Endothelial cell of umbilical vein (primary cell): ENCODE measurements at regions of chr5 and their contacts with region 1.

Region 1: DNA sequence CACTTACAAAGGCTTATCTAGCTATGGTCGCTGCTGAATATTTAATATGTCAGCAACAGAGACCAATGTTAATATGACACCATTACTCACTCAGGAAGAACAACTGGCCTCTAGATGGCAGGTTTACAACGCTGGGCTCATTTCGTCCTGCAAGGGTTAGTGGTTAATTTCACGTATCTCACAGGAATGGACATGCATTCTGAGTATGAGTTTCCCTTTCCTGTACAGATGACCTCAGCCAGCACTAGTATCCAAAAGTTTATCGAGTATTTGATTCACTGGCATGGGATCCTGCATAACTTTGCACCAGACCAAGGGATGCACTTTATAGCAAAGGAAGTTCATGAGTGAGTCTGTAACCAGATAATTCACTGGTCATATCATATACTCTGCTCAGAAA is 8.7 kb upstream of the TRPC7 start:
- DNase-seq: peak; percentile 72
- H3K4me3 ChIP-seq: no peak overlapping the region
- H3K27ac ChIP-seq: no peak overlapping the region
- H3K4me1 ChIP-seq: peaks cover 3% of the 10 kb centered on the region
- H3K27me3 ChIP-seq: peaks cover 0 to 12% of the 10 kb centered on the region in 2 experiments
- CTCF ChIP-seq: peak; percentile 51 to 58
- POLR2A ChIP-seq: no peak

Region 2: GRCh38 chr5:135718151-135718550 is 655.9 kb before region 1 on chr5:
- CTCF ChIA-PET with region 1: no interaction called
- POLR2A ChIA-PET with region 1: no interaction called
- dilution Hi-C with region 1: no loop called
- intact Hi-C with region 1: no loop called
- DNase-seq: no peak
- H3K4me3 ChIP-seq: no peak overlapping the region
- H3K27ac ChIP-seq: no peak overlapping the region
- H3K4me1 ChIP-seq: no peaks in the 10 kb centered on the region
- H3K27me3 ChIP-seq: no peaks in the 10 kb centered on the region
- CTCF ChIP-seq: no peak
- POLR2A ChIP-seq: no peak

Region 3: DNA sequence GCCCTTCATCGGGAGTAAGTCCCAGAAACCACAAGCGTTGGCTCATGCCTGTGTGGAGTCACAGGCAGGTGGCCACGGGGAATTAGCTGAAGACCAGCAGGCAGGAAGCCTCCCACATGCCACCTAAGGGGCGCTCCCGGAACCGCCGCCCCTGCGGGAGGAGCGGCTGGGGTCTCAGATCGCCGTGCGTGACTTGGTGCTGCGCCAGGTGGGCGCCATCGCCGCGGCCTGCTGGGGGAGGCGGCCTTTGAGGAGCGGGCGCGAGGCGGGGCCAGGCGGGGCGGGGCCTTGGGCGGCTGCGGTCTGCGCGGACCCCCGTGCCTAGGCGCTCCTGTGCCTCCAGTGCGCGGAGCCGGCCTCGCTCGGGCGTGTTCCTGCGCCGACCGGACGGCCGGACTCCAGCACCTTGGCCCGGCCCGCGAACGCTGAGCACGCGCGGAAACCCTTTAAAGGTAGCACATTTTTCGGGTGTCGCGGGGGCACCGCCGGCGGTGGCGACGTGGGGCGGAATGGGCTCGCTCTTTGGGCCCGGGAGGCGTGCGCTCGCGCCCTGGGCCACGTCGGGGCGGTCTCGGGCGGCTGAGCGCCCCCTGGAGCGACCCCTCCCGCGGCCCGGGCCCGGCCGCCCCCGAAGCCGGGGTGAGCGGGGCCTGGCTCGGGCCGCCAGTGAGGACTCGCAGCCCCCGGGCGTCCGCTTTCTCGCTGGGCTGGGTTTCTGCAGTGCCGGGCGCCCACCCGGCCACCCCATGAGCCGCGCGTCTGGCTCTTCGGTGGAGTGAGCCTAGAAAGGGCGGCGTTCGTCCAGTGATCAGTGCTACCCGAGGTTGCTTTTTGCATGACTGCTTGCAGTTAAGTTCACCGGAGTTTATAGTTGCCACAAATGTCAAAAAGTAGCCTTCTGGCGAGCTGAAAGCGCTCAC is 443.7 kb before region 1 on chr5:
- CTCF ChIA-PET with region 1: no interaction called
- POLR2A ChIA-PET with region 1: no interaction called
- dilution Hi-C with region 1: no loop called
- intact Hi-C with region 1: no loop called
- DNase-seq: no peak
- H3K4me3 ChIP-seq: no peak overlapping the region
- H3K27ac ChIP-seq: no peak overlapping the region
- H3K4me1 ChIP-seq: no peaks in the 10 kb centered on the region
- H3K27me3 ChIP-seq: peaks cover 35 to 73% of the 10 kb centered on the region in 2 experiments
- CTCF ChIP-seq: no peak
- POLR2A ChIP-seq: no peak

Region 4: DNA sequence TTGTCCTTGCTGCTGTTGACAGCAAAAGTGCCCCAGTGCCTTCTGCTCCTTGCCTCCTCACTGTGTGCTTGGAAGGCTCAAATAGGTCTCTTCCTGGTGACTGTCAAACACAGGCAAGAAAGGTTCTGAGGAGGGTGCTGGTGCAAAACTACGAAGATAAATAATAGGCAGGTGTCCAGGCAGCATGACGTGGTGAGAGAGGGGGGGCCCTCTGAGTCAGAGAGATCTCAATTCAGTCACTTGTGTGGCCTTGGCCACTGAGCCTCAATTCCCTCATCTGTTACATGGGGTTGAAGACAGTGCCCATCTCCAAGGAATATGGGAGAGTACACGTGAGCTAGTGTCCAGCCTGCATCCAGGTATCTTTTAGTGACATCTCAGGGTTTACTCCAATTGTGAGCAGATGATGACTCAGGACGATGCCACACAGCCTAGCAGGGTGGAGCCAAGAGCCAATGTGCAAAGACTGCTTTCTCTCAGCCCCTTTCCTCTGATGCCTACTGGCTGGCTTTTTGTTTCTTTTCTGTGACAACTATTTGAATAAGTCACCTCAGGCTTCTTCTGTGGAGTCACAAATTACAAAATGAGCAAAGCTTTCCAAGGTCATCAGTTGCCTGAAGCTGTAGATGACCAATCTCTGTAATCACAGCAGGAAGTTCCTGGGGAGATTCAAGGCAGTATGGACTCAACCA is 151.3 kb before region 1 on chr5:
- CTCF ChIA-PET with region 1: no interaction called
- POLR2A ChIA-PET with region 1: no interaction called
- dilution Hi-C with region 1: no loop called
- intact Hi-C with region 1: no loop called
- DNase-seq: no peak
- H3K4me3 ChIP-seq: no peak overlapping the region
- H3K27ac ChIP-seq: no peak overlapping the region
- H3K4me1 ChIP-seq: no peaks in the 10 kb centered on the region
- H3K27me3 ChIP-seq: peaks cover 0 to 6% of the 10 kb centered on the region in 2 experiments
- CTCF ChIP-seq: no peak
- POLR2A ChIP-seq: no peak

Region 5: GRCh38 chr5:136424835-136425584 is 51.0 kb after region 1 on chr5:
- CTCF ChIA-PET with region 1: interaction called, 3 read pairs
- POLR2A ChIA-PET with region 1: no interaction called
- dilution Hi-C with region 1: no loop called
- intact Hi-C with region 1: loop called (anchors 1 kb)
- DNase-seq: peak; percentile 58
- H3K4me3 ChIP-seq: no peak overlapping the region
- H3K27ac ChIP-seq: no peak overlapping the region
- H3K4me1 ChIP-seq: no peaks in the 10 kb centered on the region
- H3K27me3 ChIP-seq: peaks cover 5 to 8% of the 10 kb centered on the region in 2 experiments
- CTCF ChIP-seq: peak; percentile 86 to 88
- POLR2A ChIP-seq: no peak

Region 6: GRCh38 chr5:136656811-136657210 is 282.8 kb after region 1 on chr5:
- CTCF ChIA-PET with region 1: no interaction called
- POLR2A ChIA-PET with region 1: no interaction called
- dilution Hi-C with region 1: no loop called
- intact Hi-C with region 1: no loop called
- DNase-seq: peak; percentile 33
- H3K4me3 ChIP-seq: no peak overlapping the region
- H3K27ac ChIP-seq: no peak overlapping the region
- H3K4me1 ChIP-seq: peaks cover 29% of the 10 kb centered on the region
- H3K27me3 ChIP-seq: no peaks in the 10 kb centered on the region
- CTCF ChIP-seq: no peak
- POLR2A ChIP-seq: no peak